A673 (cell line): ENCODE measurements at regions of chr12 and their contacts with region 1.

Region 1: GRCh38 chr12:67222302-67222701 is 46.9 kb upstream of the CAND1 start:
- DNase-seq: peak; percentile 60
- H3K4me3 ChIP-seq: no peak overlapping the region
- H3K27ac ChIP-seq: no peak overlapping the region
- H3K4me1 ChIP-seq: no peaks in the 10 kb centered on the region
- H3K27me3 ChIP-seq: peaks cover 16% of the 10 kb centered on the region
- CTCF ChIP-seq: peak; percentile 58

Region 2: GRCh38 chr12:67025543-67026114 is 196.7 kb before region 1 on chr12:
- CTCF ChIA-PET with region 1: no interaction called
- POLR2A ChIA-PET with region 1: no interaction called
- intact Hi-C with region 1: loop called (anchors 5 kb)
- DNase-seq: peak; percentile 60
- H3K4me3 ChIP-seq: no peak overlapping the region
- H3K27ac ChIP-seq: no peak overlapping the region
- H3K4me1 ChIP-seq: no peaks in the 10 kb centered on the region
- H3K27me3 ChIP-seq: peaks cover 11% of the 10 kb centered on the region
- CTCF ChIP-seq: peak; percentile 75

Region 3: DNA sequence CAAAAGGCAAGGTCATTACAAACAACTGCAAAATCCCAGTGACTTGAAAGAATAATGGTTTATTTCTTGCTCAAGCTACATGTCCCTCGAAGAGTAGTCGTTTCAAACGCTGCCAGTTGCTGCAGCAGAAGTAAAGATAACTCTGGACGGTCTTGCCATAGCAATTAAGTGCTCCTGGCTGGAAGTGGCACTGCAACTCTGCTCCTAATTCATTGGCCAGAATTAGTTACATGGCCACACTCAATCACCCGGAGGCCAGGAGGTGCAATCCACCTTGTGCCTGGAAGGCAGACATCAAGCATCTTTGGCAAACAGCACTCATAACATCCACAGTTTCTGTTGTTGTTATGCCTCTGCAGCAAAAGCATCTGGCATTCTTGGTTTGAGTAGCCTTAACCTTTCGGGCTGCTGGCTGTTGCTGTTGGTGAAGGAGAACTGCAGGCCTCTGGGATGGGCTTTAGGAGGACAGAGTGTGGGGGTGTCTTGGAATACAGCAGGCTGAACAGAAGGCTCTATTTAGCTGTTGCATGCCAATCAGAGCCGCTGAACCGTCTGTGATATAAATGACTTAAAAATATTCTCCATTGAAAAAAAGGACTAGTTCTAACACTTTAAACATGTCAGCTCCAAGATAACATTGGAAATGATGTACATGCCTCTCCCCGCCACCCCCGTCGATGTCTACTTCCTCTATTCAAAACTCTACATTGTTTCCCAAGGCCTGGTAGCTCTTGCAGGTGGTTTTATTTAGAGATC is 302.7 kb after region 1 on chr12:
- CTCF ChIA-PET with region 1: no interaction called
- POLR2A ChIA-PET with region 1: no interaction called
- intact Hi-C with region 1: no loop called
- DNase-seq: no peak
- H3K4me3 ChIP-seq: no peak overlapping the region
- H3K27ac ChIP-seq: no peak overlapping the region
- H3K4me1 ChIP-seq: no peaks in the 10 kb centered on the region
- H3K27me3 ChIP-seq: no peaks in the 10 kb centered on the region
- CTCF ChIP-seq: no peak